ENCODE measurements at regions of chr12 and their contacts with region 1.

Region 1: DNA sequence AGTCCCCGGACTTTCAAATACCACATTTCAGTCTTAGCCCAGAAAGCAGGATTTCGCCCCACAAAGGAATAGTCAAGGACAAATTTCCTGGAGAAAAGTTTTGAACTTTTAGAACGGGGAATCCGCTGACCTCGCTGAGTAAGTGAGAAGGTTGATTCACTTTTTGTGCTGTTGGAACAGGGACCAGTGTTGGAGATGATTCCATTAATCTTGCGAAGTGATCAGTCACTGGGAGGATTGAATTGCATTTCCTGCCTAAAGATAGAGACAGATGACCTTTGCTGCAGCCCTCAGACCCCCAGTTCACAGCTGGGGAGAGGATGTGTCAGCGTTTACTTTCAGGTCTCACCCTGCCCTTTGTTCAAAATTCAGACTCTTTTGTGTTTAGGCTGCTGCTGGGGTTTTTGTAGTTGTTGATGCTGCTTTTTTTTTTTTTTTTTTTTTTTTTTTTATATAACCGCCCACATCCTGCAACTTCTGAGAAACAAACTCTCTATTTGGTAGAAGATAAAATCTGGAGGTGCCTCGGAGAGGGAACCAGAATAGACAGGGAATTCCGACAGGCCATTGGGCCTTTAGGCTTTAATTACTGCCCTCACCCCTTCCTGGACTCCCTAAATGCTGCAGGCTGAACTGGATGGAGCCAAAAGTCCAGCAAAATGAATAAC is 9.8 kb upstream of the KDM2B start:
- DNase-seq: peak; percentile 79
- ATAC-seq: peak; percentile 82
- H3K4me3 Mint-ChIP-seq: peak overlapping the region; percentile 75
- H3K27ac Mint-ChIP-seq: peak overlapping the region; percentile 98
- H3K4me1 Mint-ChIP-seq: peaks cover 32% of the 10 kb centered on the region
- H3K27me3 Mint-ChIP-seq: no peaks in the 10 kb centered on the region

Region 2: DNA sequence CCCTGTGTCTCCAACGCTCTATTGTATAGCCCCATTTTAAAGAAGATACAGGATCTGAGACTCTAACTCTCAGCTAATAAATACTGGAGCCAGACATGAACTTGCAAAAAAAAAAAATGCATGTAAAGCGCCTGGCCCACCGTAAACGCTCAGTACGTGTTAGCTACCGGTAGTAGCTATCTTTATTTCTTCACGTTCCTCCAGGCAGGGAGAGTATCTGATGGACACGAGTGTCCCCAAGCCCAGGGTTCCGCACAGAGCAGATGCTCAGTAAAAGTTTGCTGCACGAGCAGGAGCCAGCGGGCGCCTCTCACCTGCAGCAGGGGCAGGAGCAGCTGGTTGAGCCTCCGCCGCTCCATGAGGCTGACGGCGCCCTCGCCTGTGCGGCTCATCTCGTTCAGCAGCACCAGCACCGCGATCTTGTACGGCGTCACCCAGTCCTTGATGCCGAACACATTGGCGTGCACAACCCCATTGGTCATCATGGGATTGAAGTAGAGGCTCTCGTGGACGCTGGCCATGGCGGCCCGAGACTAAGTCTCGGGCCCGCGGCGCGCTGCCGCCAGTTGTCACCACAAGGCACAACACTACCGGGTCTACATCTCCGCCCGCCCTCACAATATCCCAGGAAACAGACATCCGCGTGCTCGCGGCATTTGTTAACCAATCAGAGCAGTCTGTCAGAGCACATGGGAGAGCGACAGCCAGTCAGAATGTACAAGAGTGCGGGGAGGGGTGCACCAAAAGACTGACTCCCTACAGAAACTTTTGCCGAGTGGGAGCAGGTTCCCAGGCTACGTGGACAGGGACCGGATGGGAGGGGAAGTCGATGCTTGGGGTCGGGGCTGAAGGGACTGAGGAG is 238.6 kb before region 1 on chr12 and contains the start of gene ANAPC5:
- CTCF ChIA-PET with region 1: no interaction called
- POLR2A ChIA-PET with region 1: no interaction called
- intact Hi-C with region 1: loop called in 1 of 2 experiments (anchors 1 kb)
- DNase-seq: peak; percentile 94
- ATAC-seq: peak; percentile 99
- H3K4me3 Mint-ChIP-seq: peak within 1 kb of the TSS; percentile 92
- H3K27ac Mint-ChIP-seq: peak within 1 kb of the TSS; percentile 97
- H3K4me1 Mint-ChIP-seq: peaks cover 24% of the 10 kb centered on the region
- H3K27me3 Mint-ChIP-seq: peaks cover under 1% of the 10 kb centered on the region
- total RNA-seq, gene ANAPC5: 113 to 118 TPM

Region 3: GRCh38 chr12:121579981-121580868 is 10.4 kb before region 1 on chr12:
- CTCF ChIA-PET with region 1: interaction called, 4 read pairs
- POLR2A ChIA-PET with region 1: interaction called, 4 read pairs
- intact Hi-C with region 1: loop called (anchors 1 kb)
- DNase-seq: peak; percentile 87
- ATAC-seq: peak; percentile 76
- H3K4me3 Mint-ChIP-seq: peak overlapping the region; percentile 83
- H3K27ac Mint-ChIP-seq: peak overlapping the region; percentile 99
- H3K4me1 Mint-ChIP-seq: peaks cover 24% of the 10 kb centered on the region
- H3K27me3 Mint-ChIP-seq: no peaks in the 10 kb centered on the region

Region 4: DNA sequence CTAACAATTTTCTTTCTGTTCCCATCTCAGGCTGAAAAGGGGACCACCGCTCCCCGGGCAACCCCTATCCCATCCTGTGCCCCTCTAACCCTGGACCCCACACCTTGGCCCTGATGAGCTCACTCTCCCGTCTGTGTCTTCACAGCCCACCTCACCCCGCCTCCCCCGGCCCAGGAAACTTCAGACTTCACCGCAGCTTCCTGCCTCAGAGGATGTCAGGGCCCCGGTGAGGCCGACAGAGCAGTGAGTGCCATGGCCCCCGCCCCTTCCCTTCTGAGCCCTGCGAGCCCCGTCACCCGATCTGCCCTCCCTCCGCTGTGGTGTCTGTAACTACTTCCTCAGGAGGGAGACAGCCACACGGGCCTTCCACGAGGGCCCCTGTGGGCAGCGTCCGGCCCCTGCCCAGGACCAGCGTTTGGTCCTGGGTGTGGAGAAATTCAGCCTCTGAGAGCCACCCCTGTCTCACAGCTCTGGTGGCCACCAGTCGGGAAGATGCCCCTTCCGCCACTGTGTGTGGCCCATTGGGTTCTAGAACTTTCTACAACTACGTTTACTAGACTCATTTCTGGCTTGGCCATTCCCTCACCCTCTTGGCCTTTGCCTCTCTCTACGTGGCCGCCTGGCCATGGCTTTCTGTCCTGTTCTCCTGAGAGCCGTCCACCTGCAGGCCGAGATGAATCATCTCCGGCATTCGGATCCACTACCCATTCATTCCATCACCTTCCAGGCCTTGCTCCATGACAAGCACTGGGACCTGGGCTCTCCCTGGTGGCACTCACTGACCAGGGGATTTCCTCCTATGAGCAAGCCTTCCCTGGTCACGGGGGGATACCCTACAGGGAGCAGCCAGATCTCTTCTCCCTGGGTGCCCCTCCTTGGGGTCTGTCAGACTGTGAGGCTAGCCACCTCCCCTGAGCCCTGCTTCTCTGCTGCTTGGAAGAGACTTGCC is 199.5 kb after region 1 on chr12:
- CTCF ChIA-PET with region 1: no interaction called
- POLR2A ChIA-PET with region 1: no interaction called
- intact Hi-C with region 1: no loop called
- DNase-seq: peak; percentile 96
- ATAC-seq: peak; percentile 57
- H3K4me3 Mint-ChIP-seq: peak overlapping the region; percentile 96
- H3K27ac Mint-ChIP-seq: peak overlapping the region; percentile 100
- H3K4me1 Mint-ChIP-seq: peaks cover 68% of the 10 kb centered on the region
- H3K27me3 Mint-ChIP-seq: no peaks in the 10 kb centered on the region